PC-9 (cell line): ENCODE measurements at regions of chr16 and their contacts with region 1.

Region 1: DNA sequence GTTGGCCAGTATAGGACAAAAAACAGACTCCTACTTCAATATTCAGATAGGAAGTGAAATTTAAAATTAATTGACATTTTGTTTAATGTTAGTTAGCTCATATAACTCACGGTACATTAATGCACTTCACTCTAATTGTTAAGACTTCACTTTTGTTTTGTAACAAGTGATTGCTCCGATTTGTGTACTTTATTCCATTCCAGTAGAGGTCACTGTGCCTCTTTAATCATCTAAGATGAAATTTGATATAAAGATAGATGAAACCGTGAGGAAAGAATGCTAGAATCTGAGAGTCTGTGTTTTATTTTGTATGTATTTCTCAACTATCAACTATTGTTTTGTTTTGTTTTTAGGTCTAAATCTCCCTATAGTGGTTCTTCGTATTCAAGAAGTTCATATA is 29.0 kb downstream of the RBBP6 start:
- DNase-seq: peak in 1 of 2 experiments; percentile 44
- H3K4me3 ChIP-seq: no peak overlapping the region
- H3K27ac ChIP-seq: no peak overlapping the region
- H3K4me1 ChIP-seq: no peaks in the 10 kb centered on the region
- H3K27me3 ChIP-seq: no peaks in the 10 kb centered on the region
- CTCF ChIP-seq: peak; percentile 59

Region 2: GRCh38 chr16:24776501-24777220 is 208.3 kb after region 1 on chr16:
- CTCF ChIA-PET with region 1: no interaction called
- POLR2A ChIA-PET with region 1: interaction called, 7 read pairs
- intact Hi-C with region 1: loop called (anchors 10 kb)
- DNase-seq: no peak
- H3K4me3 ChIP-seq: no peak overlapping the region
- H3K27ac ChIP-seq: no peak overlapping the region
- H3K4me1 ChIP-seq: peaks cover 5% of the 10 kb centered on the region
- H3K27me3 ChIP-seq: no peaks in the 10 kb centered on the region
- CTCF ChIP-seq: no peak